ENCODE measurements at regions of chr12 and their contacts with region 1.

Region 1: DNA sequence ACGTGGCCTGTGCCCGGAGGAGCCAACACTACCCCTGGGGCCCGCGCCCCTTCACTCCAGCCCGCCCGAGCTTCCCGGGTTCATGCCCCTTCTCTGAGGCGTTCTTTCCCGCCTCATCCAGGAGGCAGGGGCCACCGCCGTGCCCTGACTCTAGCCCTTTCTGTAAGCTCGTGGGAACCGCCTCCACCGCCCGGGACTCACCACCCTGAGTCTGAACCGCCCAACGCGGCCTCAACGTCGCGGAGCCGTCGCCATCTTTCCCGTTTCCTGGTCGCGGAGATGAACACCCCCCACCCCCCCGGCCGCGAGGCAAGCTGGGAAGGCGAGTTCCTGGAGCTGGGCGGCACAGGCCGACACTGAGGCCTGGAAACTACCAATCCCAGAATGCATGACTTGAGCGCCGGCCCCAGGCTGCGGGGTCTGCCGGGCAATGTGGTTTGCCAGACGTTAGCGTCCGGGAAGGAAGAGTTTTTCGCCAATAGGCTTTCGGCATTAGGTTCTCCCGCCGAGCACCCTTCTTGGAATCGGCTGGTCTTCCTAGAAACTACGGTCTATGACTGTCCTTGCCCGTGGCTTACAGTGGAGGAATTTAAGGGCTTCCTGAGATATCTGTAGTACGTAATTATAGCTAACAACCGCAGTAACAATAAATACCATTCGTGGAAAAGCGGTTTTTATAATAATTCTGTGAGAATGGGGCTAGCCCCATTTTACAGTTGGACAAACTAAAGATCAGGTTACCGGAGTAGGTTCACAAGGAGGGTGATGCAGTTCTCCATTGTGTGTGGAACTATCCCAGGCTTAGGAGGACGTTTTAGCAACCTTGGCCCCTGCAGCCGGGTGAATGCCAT is at the start of gene DDX23:
- DNase-seq: peak; percentile 96
- ATAC-seq: peak; percentile 95
- H3K4me3 Mint-ChIP-seq: peak within 1 kb of the TSS; percentile 98
- H3K27ac Mint-ChIP-seq: peak within 1 kb of the TSS; percentile 98
- H3K4me1 Mint-ChIP-seq: peaks cover 33% of the 10 kb centered on the region
- H3K27me3 Mint-ChIP-seq: no peaks in the 10 kb centered on the region
- total RNA-seq, gene DDX23: 127 to 154 TPM

Region 2: DNA sequence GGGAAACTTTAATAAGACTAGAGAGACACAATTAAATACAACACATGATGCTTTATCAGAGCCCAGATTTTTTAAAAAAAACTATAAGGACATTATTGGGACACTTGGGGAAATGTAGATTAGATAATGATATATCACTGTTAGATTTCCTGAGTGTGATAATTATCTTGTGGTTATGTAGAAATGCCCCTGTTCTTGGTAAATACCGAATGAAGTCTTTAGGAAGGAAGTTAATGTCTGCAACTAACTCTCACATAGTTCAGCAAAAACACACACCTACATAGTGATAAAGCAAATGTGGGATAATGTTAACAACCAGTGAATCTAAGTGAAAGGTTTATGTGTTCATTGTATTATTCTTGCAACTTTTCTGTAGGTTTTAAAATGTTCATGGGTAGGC is 48.4 kb before region 1 on chr12:
- CTCF ChIA-PET with region 1: no interaction called
- POLR2A ChIA-PET with region 1: no interaction called
- DNase-seq: no peak
- ATAC-seq: peak; percentile 58
- H3K4me3 Mint-ChIP-seq: no peak overlapping the region
- H3K27ac Mint-ChIP-seq: peak overlapping the region; percentile 27
- H3K4me1 Mint-ChIP-seq: peaks cover 19% of the 10 kb centered on the region
- H3K27me3 Mint-ChIP-seq: no peaks in the 10 kb centered on the region

Region 3: DNA sequence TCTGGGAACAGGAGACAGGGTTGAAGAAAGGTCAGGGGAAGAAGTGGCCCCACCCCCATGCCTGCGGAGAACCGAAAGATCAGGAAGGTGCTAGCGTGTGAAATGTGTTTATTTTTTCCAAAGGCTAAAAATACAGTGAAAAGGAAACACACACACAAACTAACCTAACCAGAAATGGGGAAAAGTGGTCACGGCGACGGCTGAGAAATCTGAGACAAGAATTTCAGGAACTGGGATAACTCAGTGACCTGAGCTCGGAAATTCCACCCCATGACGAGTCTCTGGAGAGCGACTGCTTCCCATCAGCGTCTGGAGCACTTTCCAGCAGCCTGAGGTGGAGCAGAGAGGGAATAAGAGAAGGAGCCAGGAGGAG is 30.2 kb after region 1 on chr12:
- CTCF ChIA-PET with region 1: interaction called, 17 read pairs
- POLR2A ChIA-PET with region 1: interaction called, 5 read pairs
- DNase-seq: no peak
- ATAC-seq: no peak
- H3K4me3 Mint-ChIP-seq: no peak overlapping the region
- H3K27ac Mint-ChIP-seq: no peak overlapping the region
- H3K4me1 Mint-ChIP-seq: peaks cover 7% of the 10 kb centered on the region
- H3K27me3 Mint-ChIP-seq: peaks cover 32% of the 10 kb centered on the region

Region 4: DNA sequence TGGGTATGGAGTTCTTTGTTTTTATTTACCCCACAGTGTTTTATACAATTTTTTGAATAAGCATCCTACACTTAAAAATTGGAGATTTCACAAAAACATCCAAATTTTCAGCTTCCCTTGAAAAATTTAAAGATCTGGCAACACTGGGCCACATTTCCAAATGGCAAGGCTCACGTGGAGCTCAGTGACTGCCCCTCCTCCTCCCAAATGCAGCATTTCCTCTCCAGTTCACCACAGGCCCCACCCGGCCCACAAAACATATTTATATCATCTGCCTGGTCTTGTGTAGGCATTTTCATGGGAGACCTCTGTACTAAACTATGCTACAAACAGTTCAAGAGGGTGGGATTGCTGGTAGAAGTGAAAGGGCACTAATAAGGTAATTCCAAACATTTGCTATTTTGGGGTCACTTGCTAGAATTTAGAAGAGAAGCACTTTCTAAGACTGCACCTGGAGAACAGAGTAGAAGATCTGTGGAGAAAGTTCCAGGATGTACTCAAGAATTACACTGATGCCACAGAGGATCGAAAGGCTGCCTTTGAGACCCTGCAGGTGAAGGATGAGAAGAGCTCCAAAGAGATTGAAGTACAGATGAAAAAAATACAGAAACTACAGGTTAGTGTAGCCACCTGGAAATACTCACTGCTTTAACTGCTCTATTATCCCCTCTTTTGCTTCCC is 65.9 kb after region 1 on chr12:
- CTCF ChIA-PET with region 1: interaction called, 21 read pairs
- POLR2A ChIA-PET with region 1: interaction called, 3 read pairs
- DNase-seq: peak; percentile 68
- ATAC-seq: peak; percentile 83
- H3K4me3 Mint-ChIP-seq: peak overlapping the region; percentile 75
- H3K27ac Mint-ChIP-seq: peak overlapping the region; percentile 88
- H3K4me1 Mint-ChIP-seq: peaks cover 19% of the 10 kb centered on the region
- H3K27me3 Mint-ChIP-seq: no peaks in the 10 kb centered on the region

Region 5: GRCh38 chr12:48943221-48943620 is 91.1 kb after region 1 on chr12:
- CTCF ChIA-PET with region 1: interaction called, 106 read pairs
- POLR2A ChIA-PET with region 1: interaction called, 4 read pairs
- DNase-seq: no peak
- ATAC-seq: no peak
- H3K4me3 Mint-ChIP-seq: no peak overlapping the region
- H3K27ac Mint-ChIP-seq: no peak overlapping the region
- H3K4me1 Mint-ChIP-seq: peaks cover 11% of the 10 kb centered on the region
- H3K27me3 Mint-ChIP-seq: no peaks in the 10 kb centered on the region

Region 6: GRCh38 chr12:48988030-48988649 is 136.0 kb after region 1 on chr12:
- CTCF ChIA-PET with region 1: interaction called, 47 read pairs
- POLR2A ChIA-PET with region 1: interaction called, 3 read pairs
- DNase-seq: peak; percentile 84
- ATAC-seq: peak; percentile 81
- H3K4me3 Mint-ChIP-seq: no peak overlapping the region
- H3K27ac Mint-ChIP-seq: no peak overlapping the region
- H3K4me1 Mint-ChIP-seq: peaks cover 8% of the 10 kb centered on the region
- H3K27me3 Mint-ChIP-seq: peaks cover 65% of the 10 kb centered on the region

Measured in activated CD8-positive, alpha-beta T cell treated with anti-CD3 and anti-CD28 coated beads, Interleukin-2, amount 10 ng/mL, durations not matched to agents 7 days and 5 days (primary cell).